ENCODE measurements at regions of chr6 and their contacts with region 1.

Region 1: GRCh38 chr6:99119109-99120031 is 171.6 kb upstream of the FBXL4 start:
- DNase-seq: peak; percentile 65
- H3K4me3 Mint-ChIP-seq: no peak overlapping the region
- H3K27ac Mint-ChIP-seq: no peak overlapping the region
- H3K4me1 Mint-ChIP-seq: no peaks in the 10 kb centered on the region
- H3K27me3 Mint-ChIP-seq: peaks cover 60% of the 10 kb centered on the region
- CTCF ChIP-seq: peak; percentile 61

Region 2: GRCh38 chr6:97497713-97498331 is 1621.5 kb before region 1 on chr6:
- CTCF ChIA-PET with region 1: interaction called, 12 read pairs
- POLR2A ChIA-PET with region 1: no interaction called
- intact Hi-C with region 1: loop called (anchors 1 kb)
- DNase-seq: peak; percentile 72
- H3K4me3 Mint-ChIP-seq: no peak overlapping the region
- H3K27ac Mint-ChIP-seq: no peak overlapping the region
- H3K4me1 Mint-ChIP-seq: no peaks in the 10 kb centered on the region
- H3K27me3 Mint-ChIP-seq: peaks cover 53% of the 10 kb centered on the region
- CTCF ChIP-seq: peak; percentile 81

Region 3: DNA sequence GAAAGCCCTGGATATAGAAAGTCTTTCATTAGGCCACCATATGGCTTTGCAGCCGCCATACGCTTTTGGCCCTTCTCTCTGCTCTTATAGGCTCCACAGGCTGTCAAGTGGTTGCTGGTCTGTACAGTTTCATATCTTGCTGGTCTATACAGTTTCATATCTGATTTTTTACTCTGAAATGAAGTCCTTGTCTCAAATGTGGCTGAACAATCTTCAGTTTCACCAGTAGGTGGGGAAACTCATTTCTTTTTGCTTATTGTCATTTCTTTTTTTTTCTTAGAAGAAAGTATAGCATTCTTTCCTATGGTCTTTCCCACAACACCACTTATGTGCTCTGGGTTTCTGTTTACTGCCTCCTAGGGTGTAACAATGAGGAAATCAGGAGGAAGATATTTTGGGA is 1064.9 kb before region 1 on chr6:
- CTCF ChIA-PET with region 1: no interaction called
- POLR2A ChIA-PET with region 1: no interaction called
- intact Hi-C with region 1: loop called (anchors 5 kb)
- DNase-seq: no peak
- H3K4me3 Mint-ChIP-seq: no peak overlapping the region
- H3K27ac Mint-ChIP-seq: no peak overlapping the region
- H3K4me1 Mint-ChIP-seq: no peaks in the 10 kb centered on the region
- H3K27me3 Mint-ChIP-seq: peaks cover 76% of the 10 kb centered on the region
- CTCF ChIP-seq: peak; percentile 11

Region 4: GRCh38 chr6:98254624-98255023 is 864.7 kb before region 1 on chr6:
- CTCF ChIA-PET with region 1: no interaction called
- POLR2A ChIA-PET with region 1: no interaction called
- intact Hi-C with region 1: no loop called
- DNase-seq: no peak
- H3K4me3 Mint-ChIP-seq: no peak overlapping the region
- H3K27ac Mint-ChIP-seq: no peak overlapping the region
- H3K4me1 Mint-ChIP-seq: no peaks in the 10 kb centered on the region
- H3K27me3 Mint-ChIP-seq: no peaks in the 10 kb centered on the region
- CTCF ChIP-seq: no peak

Region 5: GRCh38 chr6:98769544-98769943 is 349.8 kb before region 1 on chr6:
- CTCF ChIA-PET with region 1: interaction called, 4 read pairs
- POLR2A ChIA-PET with region 1: no interaction called
- intact Hi-C with region 1: loop called (anchors 1 kb)
- DNase-seq: peak; percentile 47
- H3K4me3 Mint-ChIP-seq: no peak overlapping the region
- H3K27ac Mint-ChIP-seq: no peak overlapping the region
- H3K4me1 Mint-ChIP-seq: peaks cover under 1% of the 10 kb centered on the region
- H3K27me3 Mint-ChIP-seq: peaks cover 73% of the 10 kb centered on the region
- CTCF ChIP-seq: peak; percentile 7

Measured in MCF 10A (cell line).